Activated CD4-positive, alpha-beta T cell treated with anti-CD3 and anti-CD28 coated beads for 36 hours (primary cell): ENCODE measurements at regions of chr4 and their contacts with region 1.

Region 1: GRCh38 chr4:153249199-153250041 is 45.2 kb downstream of the TRIM2 start:
- DNase-seq: peak; percentile 91
- ATAC-seq: peak; percentile 98
- H3K4me3 Mint-ChIP-seq: peak overlapping the region; percentile 71
- H3K27ac Mint-ChIP-seq: peak overlapping the region; percentile 63
- H3K4me1 Mint-ChIP-seq: peaks cover 11% of the 10 kb centered on the region
- H3K27me3 Mint-ChIP-seq: no peaks in the 10 kb centered on the region

Region 2: GRCh38 chr4:153221783-153222706 is 27.4 kb before region 1 on chr4:
- CTCF ChIA-PET with region 1: interaction called, 3 read pairs
- POLR2A ChIA-PET with region 1: no interaction called
- intact Hi-C with region 1: loop called in 1 of 2 experiments (anchors 1 kb)
- DNase-seq: peak; percentile 64
- ATAC-seq: peak; percentile 87
- H3K4me3 Mint-ChIP-seq: peak overlapping the region; percentile 76
- H3K27ac Mint-ChIP-seq: peak overlapping the region; percentile 71
- H3K4me1 Mint-ChIP-seq: peaks cover 35% of the 10 kb centered on the region
- H3K27me3 Mint-ChIP-seq: peaks cover 6% of the 10 kb centered on the region